ENCODE measurements at regions of chr12 and their contacts with region 1.

Region 1: GRCh38 chr12:102816816-102817434 is 100.1 kb downstream of the PAH start:
- DNase-seq: peak; percentile 31
- H3K4me3 ChIP-seq: no peak overlapping the region
- H3K27ac ChIP-seq: no peak overlapping the region
- H3K4me1 ChIP-seq: no peaks in the 10 kb centered on the region
- H3K27me3 ChIP-seq: no peaks in the 10 kb centered on the region; the same call in 1 of the 2 replicates
- CTCF ChIP-seq: peak; percentile 80
- EP300 ChIP-seq: no peak
- RAD21 ChIP-seq: peak; percentile 51

Region 2: DNA sequence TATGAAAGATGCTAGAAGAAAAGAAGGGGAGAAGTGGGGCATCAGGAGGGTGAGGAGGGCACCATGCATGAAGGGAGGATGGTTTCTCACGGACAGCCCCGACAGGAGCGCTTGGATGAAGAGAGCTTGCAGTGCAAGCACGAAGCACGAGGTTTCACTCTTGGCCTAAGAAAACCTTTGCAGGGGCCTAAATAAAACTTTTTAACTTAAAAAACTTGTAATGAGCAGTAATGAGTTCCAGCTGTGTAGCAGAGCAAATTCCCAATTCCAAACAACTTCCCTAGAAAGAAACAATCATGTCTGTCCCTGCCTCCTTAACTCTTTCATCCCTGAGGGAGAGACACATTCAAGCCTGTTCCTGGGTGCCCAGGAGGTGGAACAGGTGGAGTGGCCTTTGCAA is 19.4 kb before region 1 on chr12:
- CTCF ChIA-PET with region 1: interaction called, 11 read pairs
- POLR2A ChIA-PET with region 1: no interaction called
- DNase-seq: no peak
- H3K4me3 ChIP-seq: no peak overlapping the region
- H3K27ac ChIP-seq: no peak overlapping the region
- H3K4me1 ChIP-seq: no peaks in the 10 kb centered on the region
- H3K27me3 ChIP-seq: peaks cover 11% of the 10 kb centered on the region; the same call in 1 of the 2 replicates
- CTCF ChIP-seq: no peak
- EP300 ChIP-seq: no peak
- RAD21 ChIP-seq: no peak

Region 3: DNA sequence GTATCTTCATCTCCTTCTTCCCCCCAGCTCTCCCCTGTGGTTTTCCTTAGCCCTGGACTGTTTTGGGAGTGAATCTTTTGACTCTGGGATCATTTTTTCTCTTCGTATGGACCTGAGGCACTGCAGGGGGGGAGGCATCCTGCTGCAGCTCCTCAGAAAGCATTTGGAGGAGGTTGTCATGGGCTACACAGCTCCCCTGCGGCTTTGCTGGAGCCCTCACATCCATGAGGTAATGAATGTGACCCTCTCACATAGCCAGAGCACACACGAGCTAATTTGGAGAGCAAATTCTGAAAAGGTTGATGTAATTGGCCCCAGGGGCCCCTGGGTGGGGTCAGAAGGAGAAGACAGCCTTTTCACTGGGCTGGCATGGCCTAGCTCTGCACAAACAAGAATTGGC is 10.8 kb before region 1 on chr12:
- CTCF ChIA-PET with region 1: interaction called, 17 read pairs
- POLR2A ChIA-PET with region 1: no interaction called
- DNase-seq: no peak
- H3K4me3 ChIP-seq: no peak overlapping the region
- H3K27ac ChIP-seq: no peak overlapping the region
- H3K4me1 ChIP-seq: no peaks in the 10 kb centered on the region
- H3K27me3 ChIP-seq: no peaks in the 10 kb centered on the region
- CTCF ChIP-seq: no peak
- EP300 ChIP-seq: no peak
- RAD21 ChIP-seq: no peak

Region 4: GRCh38 chr12:102833687-102834445 is 16.9 kb after region 1 on chr12:
- CTCF ChIA-PET with region 1: interaction called, 13 read pairs
- POLR2A ChIA-PET with region 1: no interaction called
- DNase-seq: no peak
- H3K4me3 ChIP-seq: no peak overlapping the region
- H3K27ac ChIP-seq: no peak overlapping the region
- H3K4me1 ChIP-seq: no peaks in the 10 kb centered on the region
- H3K27me3 ChIP-seq: no peaks in the 10 kb centered on the region
- CTCF ChIP-seq: no peak
- EP300 ChIP-seq: no peak
- RAD21 ChIP-seq: no peak

Measured in SK-N-SH (cell line).